Gastrocnemius medialis (tissue), 4 donors: ENCODE measurements at regions of chr14 and their contacts with region 1.

Region 1: GRCh38 chr14:77457522-77458290 is at the starts of genes AHSA1 and VIPAS39:
- DNase-seq: peak; percentile 97 to 98
- ATAC-seq: peak; percentile 98 to 99
- H3K4me3 ChIP-seq: peak within 1 kb of the TSS; percentile 90 to 96 (median 94)
- H3K27ac ChIP-seq: peak within 1 kb of the TSS; percentile 89 to 97 (median 95)
- H3K4me1 ChIP-seq: peaks cover 23 to 25% of the 10 kb centered on the region in 2 donors
- H3K27me3 ChIP-seq: no peaks in the 10 kb centered on the region
- CTCF ChIP-seq: peak in 1 of 5 experiments; percentile 8
- POLR2A ChIP-seq: peak; percentile 78 to 82
- total RNA-seq, gene AHSA1: 112 to 200 (median 165) TPM
- total RNA-seq, gene VIPAS39: 8.8 to 19.6 (median 17.6) TPM

Region 2: DNA sequence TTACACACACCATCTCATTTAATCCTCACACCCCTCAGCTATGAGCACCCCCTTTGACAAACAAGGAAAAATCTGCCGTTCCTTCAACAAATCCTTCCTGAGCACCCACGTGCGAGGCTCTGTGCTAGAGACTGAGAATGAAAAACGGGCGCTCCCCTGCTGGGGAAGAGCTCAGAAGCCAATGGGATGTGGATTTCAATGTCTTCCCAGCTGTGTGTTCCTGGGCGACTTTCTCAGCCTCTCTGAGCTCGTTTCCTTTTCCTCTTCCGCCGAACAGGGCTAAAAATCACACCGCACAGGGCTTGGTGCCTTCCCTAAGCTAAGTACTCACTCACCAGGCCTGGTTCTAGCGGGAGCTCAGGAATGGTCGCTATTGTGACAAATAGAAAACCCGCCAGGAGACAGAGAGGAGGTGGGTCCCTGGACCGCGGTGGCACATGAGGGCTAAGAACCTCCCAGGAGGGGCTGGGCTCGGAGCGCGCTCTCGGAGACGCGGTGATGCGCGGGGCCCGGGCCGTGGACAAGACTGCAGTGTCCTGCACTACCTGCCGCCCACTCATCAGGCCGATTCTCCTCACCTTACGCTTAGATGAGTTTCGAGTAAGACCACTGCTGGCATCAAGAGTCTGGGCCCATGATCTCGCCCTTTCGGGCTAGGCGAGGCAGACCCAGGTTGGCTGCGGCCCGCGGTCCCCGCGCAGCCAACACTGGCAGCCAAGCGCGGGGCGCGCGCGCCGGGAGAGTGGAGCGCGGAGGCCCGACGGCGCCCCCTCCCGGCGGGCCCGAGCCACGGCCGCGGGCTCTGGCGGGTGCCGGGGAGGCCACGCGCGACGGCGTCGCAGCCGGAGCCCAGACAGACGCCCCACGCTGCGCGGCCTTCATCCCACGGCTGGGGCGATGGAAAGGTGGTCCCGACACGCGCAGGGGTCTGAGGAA is 333.1 kb before region 1 on chr14:
- in situ Hi-C with region 1: loop called in 1 of 4 experiments (anchors 25 kb)
- intact Hi-C with region 1: no loop called
- DNase-seq: peak in 1 of 2 donors; percentile 46
- ATAC-seq: peak; percentile 57 to 64
- H3K4me3 ChIP-seq: peak overlapping the region; percentile 41 to 63 (median 52)
- H3K27ac ChIP-seq: peak overlapping the region; percentile 41 to 99 (median 90)
- H3K4me1 ChIP-seq: peaks cover 48 to 53% of the 10 kb centered on the region in 2 donors
- H3K27me3 ChIP-seq: no peaks in the 10 kb centered on the region
- CTCF ChIP-seq: peak in 4 of 5 experiments; percentile 93 to 96 (median 94)
- POLR2A ChIP-seq: no peak

Region 3: GRCh38 chr14:77320238-77320935 is 137.3 kb before region 1 on chr14 and contains the start of gene POMT2:
- in situ Hi-C with region 1: no loop called
- intact Hi-C with region 1: loop called (anchors 1 kb)
- DNase-seq: peak; percentile 94
- ATAC-seq: peak; percentile 56 to 63
- H3K4me3 ChIP-seq: peak within 1 kb of the TSS; percentile 79 to 100 (median 82)
- H3K27ac ChIP-seq: peak within 1 kb of the TSS; percentile 95 to 99 (median 97)
- H3K4me1 ChIP-seq: peaks cover 47 to 49% of the 10 kb centered on the region in 2 donors
- H3K27me3 ChIP-seq: no peaks in the 10 kb centered on the region
- CTCF ChIP-seq: peak in 4 of 5 experiments; percentile 50 to 82 (median 70)
- POLR2A ChIP-seq: peak; percentile 89 to 90
- total RNA-seq, gene POMT2: 27.0 to 33.2 (median 28.9) TPM

Region 4: DNA sequence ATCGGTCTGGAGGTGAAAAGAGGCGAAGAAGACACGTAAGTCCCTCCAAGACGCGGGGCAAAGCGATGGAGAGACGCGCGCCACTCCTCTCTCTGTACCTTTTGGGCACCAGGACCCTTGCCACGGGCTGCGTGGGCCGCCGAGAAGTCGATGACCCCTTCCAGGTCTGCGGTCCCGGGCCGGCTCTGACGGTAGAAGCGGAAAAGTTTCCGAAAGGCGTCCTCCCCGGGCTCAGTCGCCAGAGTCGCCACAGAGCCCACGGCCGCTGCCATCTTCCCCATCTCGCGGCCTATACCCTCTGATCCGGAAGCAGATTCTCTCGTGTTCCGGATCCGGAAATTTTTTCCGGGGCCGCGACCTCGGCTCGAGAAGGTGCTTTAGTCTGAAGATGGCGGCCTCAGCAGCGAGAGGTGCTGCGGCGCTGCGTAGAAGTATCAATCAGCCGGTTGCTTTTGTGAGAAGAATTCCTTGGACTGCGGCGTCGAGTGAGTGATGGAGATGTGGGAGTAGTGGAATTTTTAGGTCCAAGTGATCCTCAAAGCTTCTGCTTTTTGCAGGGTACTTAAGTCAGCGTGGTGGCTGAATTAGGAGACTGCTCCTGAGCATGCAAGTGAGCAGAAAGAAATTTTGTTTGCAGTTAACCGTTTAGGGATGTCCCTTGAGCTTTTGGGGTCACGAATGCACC is 250.2 kb after region 1 on chr14 and contains the starts of genes ALKBH1 and SLIRP:
- in situ Hi-C with region 1: loop called (anchors 10 to 25 kb)
- intact Hi-C with region 1: loop called (anchors 2 kb)
- DNase-seq: peak; percentile 81
- ATAC-seq: peak; percentile 98
- H3K4me3 ChIP-seq: peak within 1 kb of the TSS; percentile 81 to 97 (median 92)
- H3K27ac ChIP-seq: peak within 1 kb of the TSS; percentile 74 to 87 (median 80)
- H3K4me1 ChIP-seq: peaks cover 31 to 34% of the 10 kb centered on the region in 2 donors
- H3K27me3 ChIP-seq: no peaks in the 10 kb centered on the region
- CTCF ChIP-seq: peak in 1 of 5 experiments; percentile 6
- POLR2A ChIP-seq: peak; percentile 65 to 76
- total RNA-seq, gene ALKBH1: 12.2 to 16.2 (median 13.6) TPM
- total RNA-seq, gene SLIRP: 293 to 550 (median 332) TPM